H1 (cell line): ENCODE measurements at regions of chr15 and their contacts with region 1.

Region 1: GRCh38 chr15:48352474-48353072 is 21.3 kb downstream of the DUT start:
- DNase-seq: peak in 1 of 2 experiments; percentile 19
- H3K4me3 ChIP-seq: no peak overlapping the region
- H3K27ac ChIP-seq: no peak overlapping the region
- H3K4me1 ChIP-seq: peaks cover 0 to 5% (median 1%) of the 10 kb centered on the region in 4 experiments; a peak in 2 of 7 replicates
- H3K27me3 ChIP-seq: no peaks in the 10 kb centered on the region
- CTCF ChIP-seq: peak in 2 of 3 experiments; percentile 77 to 80; a peak in 3 of 4 replicates
- EP300 ChIP-seq: no peak
- POLR2A ChIP-seq: no peak
- RAD21 ChIP-seq: peak; percentile 81 to 89

Region 2: GRCh38 chr15:47534673-47535072 is 817.9 kb before region 1 on chr15:
- CTCF ChIA-PET with region 1: no interaction called
- POLR2A ChIA-PET with region 1: no interaction called
- DNase-seq: no peak
- H3K4me3 ChIP-seq: no peak overlapping the region
- H3K27ac ChIP-seq: no peak overlapping the region
- H3K4me1 ChIP-seq: no peaks in the 10 kb centered on the region
- H3K27me3 ChIP-seq: no peaks in the 10 kb centered on the region; a peak in 1 of 7 replicates
- CTCF ChIP-seq: no peak
- EP300 ChIP-seq: no peak
- POLR2A ChIP-seq: no peak
- RAD21 ChIP-seq: no peak

Region 3: GRCh38 chr15:48221885-48222284 is 130.7 kb before region 1 on chr15:
- CTCF ChIA-PET with region 1: no interaction called
- POLR2A ChIA-PET with region 1: no interaction called
- DNase-seq: no peak
- H3K4me3 ChIP-seq: no peak overlapping the region
- H3K27ac ChIP-seq: no peak overlapping the region
- H3K4me1 ChIP-seq: no peaks in the 10 kb centered on the region
- H3K27me3 ChIP-seq: no peaks in the 10 kb centered on the region
- CTCF ChIP-seq: no peak
- EP300 ChIP-seq: no peak
- POLR2A ChIP-seq: no peak
- RAD21 ChIP-seq: no peak

Region 4: GRCh38 chr15:48298914-48299313 is 53.7 kb before region 1 on chr15:
- CTCF ChIA-PET with region 1: interaction called, 12 read pairs
- POLR2A ChIA-PET with region 1: no interaction called
- DNase-seq: no peak
- H3K4me3 ChIP-seq: peak overlapping the region in 1 of 4 experiments; percentile 40; a peak in 2 of 8 replicates
- H3K27ac ChIP-seq: no peak overlapping the region
- H3K4me1 ChIP-seq: peaks cover 6 to 21% (median 17%) of the 10 kb centered on the region in 4 experiments; a peak in 6 of 7 replicates
- H3K27me3 ChIP-seq: no peaks in the 10 kb centered on the region
- CTCF ChIP-seq: no peak
- EP300 ChIP-seq: peak in 1 of 2 experiments; percentile 78; a peak in 1 of 3 replicates
- POLR2A ChIP-seq: no peak
- RAD21 ChIP-seq: no peak

Region 5: DNA sequence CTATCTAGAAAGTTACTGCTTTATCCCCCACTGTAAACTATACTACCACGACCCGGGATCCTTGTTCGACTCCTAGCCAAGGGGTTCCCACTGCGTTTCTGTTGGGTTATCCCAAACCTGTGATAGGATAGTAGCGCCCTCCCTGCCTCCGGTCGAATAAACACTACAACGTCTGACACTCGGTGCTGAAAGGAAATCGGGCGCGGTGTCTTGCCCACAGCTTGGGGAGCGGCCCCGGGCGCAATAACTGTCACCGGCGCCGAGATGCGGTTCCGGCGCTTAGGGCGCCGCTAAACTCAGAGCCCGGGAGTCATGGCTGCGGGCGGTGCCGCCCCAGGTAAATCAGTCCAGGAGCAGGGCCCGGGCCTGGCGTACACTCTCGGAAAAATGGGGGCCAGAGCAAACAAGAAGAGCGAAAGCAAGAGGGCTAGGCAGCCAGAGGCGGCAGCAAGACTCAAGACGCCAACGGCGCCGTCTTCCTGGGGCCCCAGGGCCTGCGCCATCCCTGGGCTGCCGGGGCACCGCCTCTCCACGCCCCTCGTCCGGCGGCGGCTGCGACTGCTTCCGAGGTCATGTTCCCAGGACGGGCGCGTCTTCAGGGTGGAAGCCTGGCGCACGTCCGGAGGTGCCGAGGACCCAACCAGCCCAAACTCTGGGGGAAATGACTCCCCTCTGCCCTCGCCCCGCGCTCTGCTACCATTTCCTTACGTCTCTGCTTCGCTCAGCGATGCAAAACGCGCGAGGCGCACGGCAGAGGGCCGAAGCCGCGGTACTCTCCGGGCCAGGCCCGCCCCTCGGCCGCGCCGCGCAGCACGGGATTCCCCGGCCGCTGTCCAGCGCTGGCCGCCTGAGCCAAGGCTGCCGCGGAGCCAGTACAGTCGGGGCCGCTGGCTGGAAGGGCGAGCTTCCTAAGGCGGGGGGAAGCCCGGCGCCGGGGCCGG is 21.4 kb before region 1 on chr15 and contains the start of gene DUT:
- CTCF ChIA-PET with region 1: interaction called, 43 read pairs
- POLR2A ChIA-PET with region 1: interaction called, 4 read pairs
- DNase-seq: peak in 1 of 2 experiments; percentile 84
- H3K4me3 ChIP-seq: peak within 1 kb of the TSS; percentile 88 to 99 (median 91)
- H3K27ac ChIP-seq: peak within 1 kb of the TSS; percentile 97
- H3K4me1 ChIP-seq: peaks cover 3 to 5% (median 4%) of the 10 kb centered on the region in 4 experiments; a peak in 5 of 7 replicates
- H3K27me3 ChIP-seq: no peaks in the 10 kb centered on the region
- CTCF ChIP-seq: peak in 2 of 3 experiments; percentile 15 to 27; a peak in 2 of 4 replicates
- EP300 ChIP-seq: no peak
- POLR2A ChIP-seq: no peak; a peak in 2 of 3 replicates
- RAD21 ChIP-seq: peak; percentile 35 to 48; a peak in 3 of 4 replicates
- total RNA-seq, gene DUT: 246 and 259 TPM in 2 replicates

Region 6: GRCh38 chr15:48336940-48337339 is 15.6 kb before region 1 on chr15:
- CTCF ChIA-PET with region 1: interaction called, 43 read pairs
- POLR2A ChIA-PET with region 1: interaction called, 4 read pairs
- DNase-seq: no peak
- H3K4me3 ChIP-seq: no peak overlapping the region
- H3K27ac ChIP-seq: no peak overlapping the region
- H3K4me1 ChIP-seq: peaks cover 3 to 9% (median 3%) of the 10 kb centered on the region in 4 experiments; a peak in 5 of 7 replicates
- H3K27me3 ChIP-seq: no peaks in the 10 kb centered on the region
- CTCF ChIP-seq: peak; percentile 56 to 75 (median 61)
- EP300 ChIP-seq: no peak
- POLR2A ChIP-seq: no peak
- RAD21 ChIP-seq: peak; percentile 65 to 78